ENCODE measurements at regions of chrX and their contacts with region 1.

Region 1: GRCh38 chrX:1657367-1658070 is 42.7 kb downstream of the ASMT start:
- DNase-seq: no peak
- ATAC-seq: peak; percentile 57
- H3K4me3 ChIP-seq: no peak overlapping the region
- H3K27ac ChIP-seq: no peak overlapping the region
- H3K4me1 ChIP-seq: no peaks in the 10 kb centered on the region
- H3K27me3 ChIP-seq: no peaks in the 10 kb centered on the region
- CTCF ChIP-seq: peak; percentile 17; the same call in 1 of the 2 replicates
- EP300 ChIP-seq: no peak
- POLR2A ChIP-seq: no peak
- RAD21 ChIP-seq: no peak

Region 2: DNA sequence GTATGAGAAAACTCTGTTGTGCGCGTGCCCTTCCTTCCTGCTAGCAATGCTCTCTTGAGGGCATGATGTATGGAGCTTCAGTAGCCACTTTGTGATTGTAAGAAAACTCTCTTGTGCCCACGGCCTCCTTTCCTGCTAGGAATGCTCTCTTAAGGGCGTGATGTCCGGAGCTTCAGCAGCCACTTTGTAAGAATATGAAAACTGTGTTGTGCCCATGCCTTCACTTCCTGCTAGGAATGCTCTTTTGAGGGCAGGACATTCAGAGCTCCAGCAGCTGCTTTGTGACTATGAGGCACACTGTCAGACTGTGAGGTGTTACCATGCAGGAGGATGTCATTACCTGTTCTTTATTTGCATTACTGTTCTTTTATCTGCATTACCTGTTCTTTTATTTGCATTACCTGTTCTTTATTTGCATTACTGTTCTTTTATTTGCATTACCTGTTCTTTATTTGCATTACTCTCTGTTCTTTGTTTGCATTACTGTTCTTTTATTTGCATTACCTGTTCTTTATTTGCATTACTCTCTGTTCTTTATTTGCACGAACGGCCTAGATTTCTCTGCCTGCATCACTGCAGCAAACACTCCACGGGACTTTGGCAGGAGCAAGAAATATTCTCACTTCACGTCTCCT is 611.7 kb before region 1 on chrX:
- CTCF ChIA-PET with region 1: no interaction called
- POLR2A ChIA-PET with region 1: no interaction called
- in situ Hi-C with region 1: no loop called
- intact Hi-C with region 1: no loop called
- DNase-seq: peak; percentile 14
- ATAC-seq: no peak
- H3K4me3 ChIP-seq: no peak overlapping the region
- H3K27ac ChIP-seq: no peak overlapping the region
- H3K4me1 ChIP-seq: no peaks in the 10 kb centered on the region
- H3K27me3 ChIP-seq: no peaks in the 10 kb centered on the region
- CTCF ChIP-seq: no peak
- EP300 ChIP-seq: no peak
- POLR2A ChIP-seq: no peak
- RAD21 ChIP-seq: no peak

Region 3: GRCh38 chrX:2595258-2595657 is 937.7 kb after region 1 on chrX:
- CTCF ChIA-PET with region 1: no interaction called
- POLR2A ChIA-PET with region 1: no interaction called
- in situ Hi-C with region 1: no loop called
- intact Hi-C with region 1: loop called (anchors 1 kb)
- DNase-seq: no peak
- ATAC-seq: no peak
- H3K4me3 ChIP-seq: no peak overlapping the region
- H3K27ac ChIP-seq: no peak overlapping the region
- H3K4me1 ChIP-seq: peaks cover 5% of the 10 kb centered on the region; the same call in 1 of the 2 replicates
- H3K27me3 ChIP-seq: no peaks in the 10 kb centered on the region
- CTCF ChIP-seq: no peak
- EP300 ChIP-seq: no peak
- POLR2A ChIP-seq: no peak
- RAD21 ChIP-seq: no peak

Region 4: GRCh38 chrX:2627272-2627867 is 969.9 kb after region 1 on chrX:
- CTCF ChIA-PET with region 1: no interaction called
- POLR2A ChIA-PET with region 1: no interaction called
- in situ Hi-C with region 1: no loop called
- intact Hi-C with region 1: loop called (anchors 1 kb)
- DNase-seq: peak; percentile 71
- ATAC-seq: peak; percentile 92
- H3K4me3 ChIP-seq: no peak overlapping the region
- H3K27ac ChIP-seq: no peak overlapping the region
- H3K4me1 ChIP-seq: no peaks in the 10 kb centered on the region
- H3K27me3 ChIP-seq: no peaks in the 10 kb centered on the region
- CTCF ChIP-seq: peak; percentile 74
- EP300 ChIP-seq: no peak
- POLR2A ChIP-seq: no peak
- RAD21 ChIP-seq: peak; percentile 69